AG04449 (cell line): ENCODE measurements at regions of chr16 and their contacts with region 1.

Region 1: DNA sequence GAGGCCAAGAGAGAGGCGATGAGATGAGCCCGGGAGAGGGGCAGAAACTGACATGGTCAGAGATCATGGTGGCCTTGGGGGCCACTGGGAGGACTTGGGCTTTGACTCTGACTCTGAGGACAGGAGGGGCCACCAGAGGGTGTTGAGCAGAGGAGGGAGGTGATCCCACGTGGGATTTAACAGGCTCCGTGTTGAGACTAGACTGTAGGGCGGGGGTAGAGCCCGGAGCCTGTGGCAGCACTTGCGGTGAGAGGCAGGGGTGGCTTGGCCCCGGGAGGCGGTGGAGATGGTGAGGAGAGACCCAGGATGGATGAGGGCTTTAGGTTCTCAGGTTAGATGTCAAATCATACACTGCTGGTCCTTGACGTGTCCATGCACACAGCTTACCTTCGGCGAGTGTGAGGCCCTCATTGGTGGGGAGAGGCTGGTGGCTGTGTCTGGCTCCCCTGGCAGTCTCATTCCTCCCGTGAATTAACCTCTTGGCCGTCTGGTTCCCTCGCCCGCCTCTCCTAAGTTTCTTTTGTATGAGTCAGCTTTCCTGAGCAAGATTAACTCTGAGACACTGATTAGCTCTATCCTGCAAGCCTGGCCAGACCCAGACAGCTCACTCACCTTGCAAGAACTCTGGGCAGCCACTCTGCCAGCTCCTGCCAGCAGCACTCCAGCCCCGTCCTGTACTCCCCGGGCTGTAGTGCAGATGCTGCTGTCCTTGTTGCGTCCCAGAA is 39.7 kb downstream of the VPS35L start:
- DNase-seq: peak; percentile 88
- H3K4me3 ChIP-seq: no peak overlapping the region
- CTCF ChIP-seq: no peak

Region 2: GRCh38 chr16:19583665-19584300 is 11.4 kb before region 1 on chr16:
- CTCF ChIA-PET with region 1: interaction called, 147 read pairs
- POLR2A ChIA-PET with region 1: no interaction called
- DNase-seq: no peak
- H3K4me3 ChIP-seq: no peak overlapping the region
- CTCF ChIP-seq: peak; percentile 82

Region 3: DNA sequence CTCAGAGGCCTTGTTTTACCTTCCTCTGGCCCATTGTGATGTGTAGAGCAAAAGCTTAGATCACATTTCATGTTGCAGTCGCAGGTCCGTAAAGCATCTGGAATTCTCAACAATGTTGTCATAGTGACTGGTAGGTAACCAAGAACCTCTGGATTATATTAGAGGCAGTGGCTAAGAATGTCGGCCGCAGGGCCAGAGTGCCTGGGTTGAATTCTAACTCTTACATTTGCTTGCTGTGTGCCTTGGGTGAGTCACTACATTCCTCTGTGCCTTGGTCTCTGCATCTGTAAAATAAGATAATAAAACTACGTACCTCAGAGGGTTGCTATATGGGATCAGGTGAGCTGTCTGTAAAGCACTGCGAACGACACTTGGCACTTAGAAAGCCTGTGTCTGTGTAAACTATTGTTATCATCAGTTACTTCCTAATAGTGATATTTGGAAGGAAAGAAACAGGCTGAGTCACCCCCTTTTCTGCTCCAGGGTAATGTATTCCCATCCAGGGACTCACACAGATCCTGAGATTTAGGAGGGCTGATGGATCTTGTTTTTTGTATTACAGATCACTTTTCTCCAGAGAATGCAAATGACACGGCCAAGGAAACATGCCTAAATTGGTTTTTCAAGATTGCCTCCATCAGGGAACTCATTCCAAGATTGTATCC is 12.5 kb after region 1 on chr16:
- CTCF ChIA-PET with region 1: interaction called, 147 read pairs
- POLR2A ChIA-PET with region 1: interaction called, 3 read pairs
- DNase-seq: no peak
- H3K4me3 ChIP-seq: no peak overlapping the region
- CTCF ChIP-seq: no peak